ENCODE measurements at regions of chr3 and their contacts with region 1.

Region 1: DNA sequence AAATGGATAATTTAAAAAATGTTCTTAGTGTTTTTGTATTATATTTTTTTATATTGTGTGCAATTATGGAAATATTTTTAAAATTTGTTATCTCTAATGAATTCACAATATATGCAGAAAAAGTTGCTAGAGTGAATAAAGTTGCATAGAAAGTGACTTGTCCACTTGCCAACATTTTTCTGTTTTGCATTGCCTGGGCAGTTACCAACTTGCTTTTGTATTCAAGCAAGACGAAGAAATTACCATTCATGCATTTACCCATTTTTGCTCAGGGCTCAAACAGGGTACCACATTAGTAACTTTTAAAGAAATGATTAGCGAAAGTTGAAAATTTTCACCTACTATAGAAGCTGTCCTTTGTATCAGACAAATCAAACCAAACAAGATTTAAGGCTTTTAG is 152.9 kb upstream of the STRIT1 start:
- DNase-seq: no peak
- H3K4me3 ChIP-seq: no peak overlapping the region
- H3K27ac ChIP-seq: no peak overlapping the region
- H3K4me1 ChIP-seq: no peaks in the 10 kb centered on the region
- H3K27me3 ChIP-seq: no peaks in the 10 kb centered on the region
- CTCF ChIP-seq: no peak
- EP300 ChIP-seq: no peak
- POLR2A ChIP-seq: no peak

Region 2: GRCh38 chr3:155519078-155519477 is 72.7 kb after region 1 on chr3:
- in situ Hi-C with region 1: no loop called
- intact Hi-C with region 1: loop called (anchors 2 kb)
- DNase-seq: no peak
- H3K4me3 ChIP-seq: no peak overlapping the region
- H3K27ac ChIP-seq: no peak overlapping the region
- H3K4me1 ChIP-seq: no peaks in the 10 kb centered on the region
- H3K27me3 ChIP-seq: no peaks in the 10 kb centered on the region
- CTCF ChIP-seq: no peak
- EP300 ChIP-seq: no peak
- POLR2A ChIP-seq: no peak

Measured in transverse colon (tissue), 4 donors.